ENCODE measurements at regions of chr14 and their contacts with region 1.

Region 1: GRCh38 chr14:80850197-80850814 is 91.2 kb downstream of the CEP128 start:
- DNase-seq: no peak
- H3K4me3 Mint-ChIP-seq: no peak overlapping the region
- H3K27ac Mint-ChIP-seq: no peak overlapping the region
- H3K4me1 Mint-ChIP-seq: no peaks in the 10 kb centered on the region
- H3K27me3 Mint-ChIP-seq: no peaks in the 10 kb centered on the region

Region 2: DNA sequence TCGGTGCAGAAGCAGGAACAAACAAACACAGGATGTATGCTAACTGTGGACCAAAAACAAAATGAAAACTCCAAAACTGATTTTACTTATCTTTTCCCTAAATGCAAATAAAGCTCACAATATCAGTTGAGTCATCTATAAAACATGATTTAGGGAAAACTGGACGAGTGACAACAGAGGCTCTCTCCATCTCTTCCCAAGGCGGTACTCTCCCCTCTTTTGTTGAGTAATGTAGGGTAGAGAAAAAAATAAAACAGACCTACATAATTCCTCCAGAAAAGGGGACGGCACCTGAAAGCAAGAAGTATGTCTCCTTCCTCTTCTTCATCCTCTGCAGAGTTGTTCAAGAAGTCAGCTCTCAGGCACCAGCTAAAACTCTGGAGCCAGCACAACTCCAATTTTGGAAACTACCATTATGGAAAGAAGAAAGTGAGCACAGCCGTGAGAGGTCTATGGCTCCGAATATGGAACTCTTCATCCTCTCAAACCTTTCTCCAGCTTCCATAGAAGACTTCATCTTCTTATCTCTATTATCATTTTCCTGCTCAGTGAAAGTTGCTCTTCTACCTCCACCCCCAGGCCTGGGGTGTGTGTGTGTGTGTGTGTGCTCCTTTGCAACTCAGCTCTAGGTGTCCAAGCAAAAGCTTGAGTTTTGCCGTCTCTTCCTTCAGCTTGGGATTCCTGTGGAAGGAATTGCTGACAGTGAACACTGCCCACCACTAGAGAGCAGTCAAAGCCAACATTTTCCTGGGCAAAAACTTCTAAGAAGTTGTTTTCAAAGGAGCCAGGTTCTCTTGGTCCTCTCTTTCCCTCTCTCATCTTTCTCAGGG is 794.4 kb before region 1 on chr14:
- intact Hi-C with region 1: loop called (anchors 10 kb)
- DNase-seq: peak; percentile 55
- H3K4me3 Mint-ChIP-seq: no peak overlapping the region
- H3K27ac Mint-ChIP-seq: no peak overlapping the region
- H3K4me1 Mint-ChIP-seq: no peaks in the 10 kb centered on the region
- H3K27me3 Mint-ChIP-seq: no peaks in the 10 kb centered on the region

Region 3: DNA sequence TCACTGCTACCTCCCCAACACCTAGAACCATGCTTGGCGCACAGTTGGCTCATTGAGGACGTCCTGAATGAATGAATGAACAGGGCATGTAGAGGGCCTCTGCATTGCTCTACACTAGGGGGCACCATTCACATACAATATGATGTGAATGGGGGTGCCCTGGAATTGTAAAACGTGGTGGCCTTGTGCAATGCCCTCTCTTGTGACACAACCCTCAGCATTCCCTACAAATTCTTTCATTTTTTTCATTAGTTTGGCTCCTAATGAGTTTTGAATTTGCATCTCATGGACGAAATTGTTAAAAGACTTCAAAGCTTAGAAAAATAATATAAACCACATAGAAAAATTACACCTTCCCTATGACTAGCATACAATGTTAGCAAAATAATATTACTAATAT is 636.7 kb before region 1 on chr14:
- intact Hi-C with region 1: loop called (anchors 10 kb)
- DNase-seq: peak; percentile 56
- H3K4me3 Mint-ChIP-seq: no peak overlapping the region
- H3K27ac Mint-ChIP-seq: no peak overlapping the region
- H3K4me1 Mint-ChIP-seq: peaks cover 3% of the 10 kb centered on the region
- H3K27me3 Mint-ChIP-seq: no peaks in the 10 kb centered on the region